Astrocyte of the cerebellum (primary cell): ENCODE measurements at regions of chr3 and their contacts with region 1.

Region 1: DNA sequence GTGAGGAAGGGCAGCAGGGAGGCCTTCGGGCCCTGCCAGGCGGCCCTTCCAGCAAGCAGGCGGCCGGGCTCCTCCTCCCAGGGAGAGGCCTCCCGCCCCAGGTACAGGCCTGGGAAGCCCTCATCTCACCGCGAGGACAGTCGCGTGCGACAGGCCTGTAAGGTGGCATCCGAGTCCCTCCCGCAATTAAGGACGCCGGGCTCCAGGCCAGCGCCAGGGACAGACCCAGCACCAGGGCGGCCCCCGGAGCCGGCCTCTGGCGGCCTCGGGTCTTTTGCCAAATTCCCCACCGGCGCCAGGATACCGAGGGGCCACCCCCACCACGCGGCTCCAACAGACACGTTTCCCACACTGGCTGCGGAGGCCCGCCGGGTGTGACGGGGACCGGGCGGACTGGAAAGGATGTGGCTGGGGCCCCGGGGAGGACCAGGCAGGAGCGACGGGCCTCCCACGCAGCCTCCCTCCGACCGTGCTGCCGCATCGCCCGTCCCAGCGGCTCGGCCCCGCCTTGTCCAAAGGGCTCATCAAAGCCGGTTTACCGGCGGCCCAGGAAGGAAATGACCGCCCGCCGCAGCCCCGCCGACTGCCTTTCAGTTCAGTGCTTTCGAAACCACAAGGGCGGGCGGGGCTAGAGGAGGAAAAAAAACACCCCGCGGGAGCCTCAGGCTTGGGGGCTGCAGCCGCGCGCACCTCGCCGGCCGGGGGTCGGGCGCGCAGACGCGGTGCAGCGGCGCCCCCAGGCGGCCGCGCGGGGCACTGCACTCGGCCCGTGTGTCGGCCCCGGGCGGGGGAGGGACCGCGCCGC is 11.3 kb downstream of the XXYLT1 start:
- DNase-seq: peak; percentile 88
- H3K4me3 ChIP-seq: peak overlapping the region; percentile 48
- CTCF ChIP-seq: peak; percentile 12

Region 2: GRCh38 chr3:194682694-194683310 is 576.9 kb before region 1 on chr3:
- in situ Hi-C with region 1: loop called (anchors 5 kb)
- DNase-seq: peak; percentile 81
- H3K4me3 ChIP-seq: no peak overlapping the region
- CTCF ChIP-seq: peak; percentile 90

Region 3: DNA sequence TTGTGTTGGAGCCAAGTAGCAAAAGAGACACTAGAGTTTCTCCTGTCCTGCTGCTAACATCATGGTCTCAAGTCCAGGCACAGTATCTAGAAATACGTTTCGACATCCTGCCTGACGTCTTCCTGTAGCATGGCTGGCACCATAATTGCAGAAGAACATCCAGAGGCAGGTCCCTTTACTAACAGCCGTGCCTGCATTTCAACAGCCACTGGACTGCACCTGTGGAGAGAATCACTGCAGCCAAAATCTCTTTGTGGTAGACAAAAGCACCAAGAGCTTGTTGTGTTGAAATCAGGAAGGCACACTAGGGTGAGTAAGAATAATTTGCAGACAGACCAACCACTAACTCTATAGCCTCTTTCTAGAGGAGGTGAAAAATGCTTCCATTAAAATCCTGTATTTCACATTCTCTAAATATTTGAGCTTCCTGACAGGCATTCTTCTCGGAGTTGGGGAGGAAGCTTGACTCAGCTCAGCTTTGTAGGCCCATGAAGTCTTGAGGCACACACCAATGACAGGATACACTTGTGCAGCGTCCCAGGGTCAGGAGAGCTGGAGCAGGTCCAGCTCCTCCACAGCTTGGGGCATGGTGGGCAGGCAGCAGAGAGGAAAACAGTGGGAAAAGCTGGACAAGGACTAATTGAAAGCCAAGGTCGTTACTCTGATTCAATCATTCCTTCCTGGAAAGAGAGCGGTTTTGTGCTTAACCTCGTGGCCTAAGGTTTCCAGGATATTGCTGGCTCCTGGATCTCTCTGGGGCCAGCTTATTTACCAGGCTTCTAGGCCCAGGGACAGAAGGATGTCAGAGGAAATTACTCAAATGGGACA is 329.1 kb before region 1 on chr3:
- in situ Hi-C with region 1: no loop called
- DNase-seq: peak; percentile 49
- H3K4me3 ChIP-seq: no peak overlapping the region
- CTCF ChIP-seq: no peak

Region 4: DNA sequence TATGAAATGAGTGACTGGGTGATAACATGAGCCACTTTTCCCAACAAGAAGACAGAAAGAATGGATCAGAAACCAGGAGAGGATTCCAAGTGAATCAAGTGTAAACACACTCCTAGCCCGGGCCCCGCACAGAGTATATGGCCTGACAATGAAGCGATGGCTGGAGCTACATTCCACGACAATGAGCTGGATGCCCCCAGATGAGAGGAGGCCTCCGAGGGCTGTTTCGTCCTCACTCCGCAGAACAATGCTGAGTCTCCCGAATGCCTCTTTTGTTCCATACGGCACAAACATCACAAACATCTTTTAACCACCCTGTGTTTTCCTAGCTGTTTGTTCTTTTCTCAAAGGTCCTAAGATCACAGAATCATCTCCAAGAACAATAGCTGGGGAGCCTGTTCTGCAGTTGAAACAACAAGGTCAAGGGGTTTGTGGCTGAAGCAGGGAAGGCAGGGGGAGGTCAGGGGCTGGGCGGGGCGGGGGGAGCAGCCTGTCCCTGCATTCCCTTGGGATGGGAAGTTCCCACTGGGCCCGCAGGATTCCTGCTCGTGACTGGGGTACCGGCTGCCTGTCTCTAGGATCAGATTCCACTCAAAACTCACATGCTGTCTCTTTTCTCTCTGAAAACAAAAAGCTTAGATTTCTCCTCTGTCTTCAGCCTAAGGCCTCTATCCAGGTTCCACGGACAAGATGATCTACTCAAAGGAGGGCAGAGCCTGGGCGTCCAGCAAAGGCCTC is 140.0 kb before region 1 on chr3:
- in situ Hi-C with region 1: loop called (anchors 5 kb)
- DNase-seq: peak; percentile 82
- H3K4me3 ChIP-seq: no peak overlapping the region
- CTCF ChIP-seq: no peak